K562 (cell line): ENCODE measurements at regions of chr15 and their contacts with region 1.

Region 1: DNA sequence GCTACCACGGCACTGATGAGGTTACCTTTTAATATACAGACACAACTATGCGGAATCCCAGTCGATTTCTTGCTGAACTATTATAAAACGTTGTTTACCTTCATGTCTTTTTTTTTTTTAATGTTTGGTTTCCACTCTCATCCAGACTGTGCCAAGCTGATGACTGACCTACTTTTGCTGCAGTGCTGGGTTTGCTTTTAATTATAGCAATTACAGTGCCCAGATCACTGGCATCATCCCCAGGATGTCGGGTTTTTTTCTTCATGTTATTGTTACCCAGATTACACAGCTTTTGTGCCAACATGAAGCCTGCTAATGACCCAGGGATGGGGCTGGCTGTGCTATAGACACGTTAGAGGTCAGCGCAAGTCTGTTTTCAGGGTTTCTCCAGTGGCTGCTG is 294.0 kb upstream of the ATP10A start:
- DNase-seq: no peak
- ATAC-seq: no peak
- H3K4me3 ChIP-seq: no peak overlapping the region
- H3K27ac ChIP-seq: no peak overlapping the region
- H3K4me1 ChIP-seq: no peaks in the 10 kb centered on the region
- H3K27me3 ChIP-seq: peaks cover 0 to 5% of the 10 kb centered on the region in 2 experiments; a peak in 1 of 5 replicates
- CTCF ChIP-seq: no peak
- EP300 ChIP-seq: no peak
- POLR2A ChIP-seq: no peak
- RAD21 ChIP-seq: no peak

Region 2: GRCh38 chr15:25863111-25863967 is 293.7 kb before region 1 on chr15 and contains the start of gene ATP10A:
- CTCF ChIA-PET with region 1: no interaction called
- POLR2A ChIA-PET with region 1: no interaction called
- in situ Hi-C with region 1: no loop called
- intact Hi-C with region 1: loop called (anchors 5 kb)
- DNase-seq: no peak
- ATAC-seq: no peak
- H3K4me3 ChIP-seq: no peak within 1 kb of the TSS
- H3K27ac ChIP-seq: no peak within 1 kb of the TSS
- H3K4me1 ChIP-seq: peaks cover 0 to 12% of the 10 kb centered on the region in 2 experiments; a peak in 1 of 5 replicates
- H3K27me3 ChIP-seq: peaks cover 0 to 44% of the 10 kb centered on the region in 2 experiments; a peak in 3 of 5 replicates
- CTCF ChIP-seq: no peak
- EP300 ChIP-seq: no peak
- POLR2A ChIP-seq: no peak
- RAD21 ChIP-seq: no peak
- polyA plus RNA-seq, gene ATP10A: not detected

Region 3: GRCh38 chr15:26082221-26083109 is 74.6 kb before region 1 on chr15:
- CTCF ChIA-PET with region 1: no interaction called
- POLR2A ChIA-PET with region 1: no interaction called
- in situ Hi-C with region 1: no loop called
- intact Hi-C with region 1: no loop called
- DNase-seq: peak; percentile 91 to 94 (median 94)
- ATAC-seq: peak; percentile 98
- H3K4me3 ChIP-seq: peak overlapping the region; percentile 56
- H3K27ac ChIP-seq: peak overlapping the region; percentile 60
- H3K4me1 ChIP-seq: peaks cover 0 to 4% of the 10 kb centered on the region in 2 experiments; a peak in 3 of 5 replicates
- H3K27me3 ChIP-seq: no peaks in the 10 kb centered on the region
- CTCF ChIP-seq: no peak
- EP300 ChIP-seq: peak; percentile 76
- POLR2A ChIP-seq: peak; percentile 79
- RAD21 ChIP-seq: no peak